ENCODE measurements at regions of chr15 and their contacts with region 1.

Region 1: DNA sequence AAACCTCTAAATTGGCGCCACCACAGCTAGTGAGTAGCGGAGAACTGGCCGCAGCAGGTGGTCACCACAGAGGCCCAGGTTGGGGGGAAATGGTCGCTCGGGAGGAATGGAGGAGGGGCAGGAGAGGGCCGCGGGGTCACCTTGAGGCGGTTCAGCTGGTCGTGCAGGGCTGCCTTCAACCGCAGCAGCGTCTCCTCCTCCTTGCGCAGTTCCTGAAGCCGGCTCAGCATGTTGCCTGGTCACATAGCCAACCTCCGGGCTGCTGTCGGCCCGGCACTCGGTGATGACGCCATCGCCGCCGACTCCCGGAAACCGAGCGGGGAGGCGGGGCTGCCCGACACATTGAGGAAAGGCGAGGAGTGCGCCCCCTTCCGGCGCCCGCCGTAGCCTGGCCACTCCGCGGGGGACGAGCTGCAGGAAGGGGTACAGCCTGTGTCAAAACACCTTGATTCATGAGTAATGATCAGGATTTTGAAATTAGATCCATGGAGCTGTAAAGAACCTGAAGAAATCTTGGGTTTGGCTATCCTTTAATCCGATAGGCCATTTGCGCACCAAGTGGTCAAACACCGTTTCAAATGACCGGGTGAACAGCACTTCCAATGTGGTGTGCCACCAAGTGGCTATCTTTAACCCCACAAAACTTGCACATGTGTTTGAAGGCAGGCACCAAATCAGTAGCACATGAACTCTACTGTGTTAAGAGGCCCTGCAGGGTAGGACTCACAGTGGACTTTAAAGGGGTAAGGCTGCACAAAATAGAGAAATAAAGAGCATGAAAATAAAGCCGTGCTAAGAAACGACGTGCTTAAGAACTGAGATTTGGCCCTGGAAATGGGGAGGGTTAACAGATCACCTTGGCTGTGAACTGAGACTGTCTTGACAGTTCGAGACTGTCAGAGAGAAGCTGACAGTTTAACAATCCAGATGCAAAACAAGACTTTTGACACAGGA is at the start of gene SNAPC5:
- DNase-seq: peak; percentile 98
- H3K4me3 ChIP-seq: peak within 1 kb of the TSS; percentile 75
- H3K27ac ChIP-seq: peak within 1 kb of the TSS; percentile 83
- H3K4me1 ChIP-seq: peaks cover 15% of the 10 kb centered on the region
- H3K27me3 ChIP-seq: no peaks in the 10 kb centered on the region
- CTCF ChIP-seq: peak; percentile 100
- total RNA-seq, gene SNAPC5: 28.9 and 35.2 TPM in 2 replicates

Region 2: GRCh38 chr15:66251790-66252684 is 245.7 kb before region 1 on chr15:
- CTCF ChIA-PET with region 1: no interaction called
- POLR2A ChIA-PET with region 1: no interaction called
- intact Hi-C with region 1: loop called (anchors 5 kb)
- DNase-seq: peak; percentile 67
- H3K4me3 ChIP-seq: peak overlapping the region; percentile 44
- H3K27ac ChIP-seq: no peak overlapping the region
- H3K4me1 ChIP-seq: peaks cover 5% of the 10 kb centered on the region
- H3K27me3 ChIP-seq: peaks cover 90% of the 10 kb centered on the region
- CTCF ChIP-seq: peak; percentile 85

Region 3: DNA sequence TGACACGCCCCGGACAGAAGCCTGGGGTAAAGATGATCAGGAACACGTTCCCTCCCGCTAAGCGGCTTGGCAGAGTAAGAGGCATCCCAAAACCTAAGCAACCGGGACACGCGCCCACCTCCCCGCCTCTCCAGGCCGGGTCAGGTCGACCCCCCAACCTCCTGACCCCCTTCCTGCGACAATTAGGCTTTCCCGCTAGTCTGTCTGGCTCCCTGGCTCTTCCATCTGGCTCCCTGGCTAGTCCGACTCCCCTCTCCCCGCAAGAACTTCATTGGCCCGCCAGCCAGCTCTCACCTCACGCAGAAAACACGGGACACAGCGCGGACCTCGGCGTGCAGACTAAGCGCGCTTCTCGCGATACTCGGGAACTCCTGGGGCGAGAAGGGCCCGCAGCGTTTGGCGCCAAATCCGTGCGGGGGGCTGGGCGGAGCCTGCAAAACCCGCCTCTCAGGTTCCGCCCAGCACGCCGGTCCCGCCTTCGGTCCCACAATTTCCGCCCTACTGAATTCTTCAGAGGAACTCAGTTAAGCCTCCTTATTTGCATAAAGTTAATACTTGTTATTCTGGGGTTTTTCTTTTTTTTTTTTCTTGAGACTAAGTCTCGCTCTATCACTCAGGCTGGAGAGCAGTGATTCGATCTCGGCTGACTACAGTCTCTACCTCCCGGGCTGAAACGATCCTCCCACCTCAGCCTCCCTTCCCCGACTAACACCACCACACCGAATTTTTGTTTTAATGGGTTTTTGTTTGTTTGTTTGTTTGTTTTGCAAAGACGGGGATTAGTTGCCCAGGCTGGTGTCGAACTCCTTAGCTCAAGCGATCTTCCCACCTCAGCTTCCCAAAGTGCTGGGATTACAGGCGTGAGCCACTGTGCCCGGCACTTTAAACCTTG is 141.2 kb before region 1 on chr15 and contains the start of gene TIPIN:
- CTCF ChIA-PET with region 1: no interaction called
- POLR2A ChIA-PET with region 1: no interaction called
- intact Hi-C with region 1: loop called (anchors 2 kb)
- DNase-seq: peak; percentile 97
- H3K4me3 ChIP-seq: peak within 1 kb of the TSS; percentile 86
- H3K27ac ChIP-seq: peak within 1 kb of the TSS; percentile 93
- H3K4me1 ChIP-seq: peaks cover 7% of the 10 kb centered on the region
- H3K27me3 ChIP-seq: no peaks in the 10 kb centered on the region
- CTCF ChIP-seq: no peak
- total RNA-seq, gene TIPIN: 37.7 and 42.1 TPM in 2 replicates

Region 4: GRCh38 chr15:66386204-66387123 is 111.3 kb before region 1 on chr15 and contains the start of gene MAP2K1:
- CTCF ChIA-PET with region 1: interaction called, 24 read pairs
- POLR2A ChIA-PET with region 1: no interaction called
- intact Hi-C with region 1: loop called (anchors 2 kb)
- DNase-seq: peak; percentile 99
- H3K4me3 ChIP-seq: peak within 1 kb of the TSS; percentile 99
- H3K27ac ChIP-seq: peak within 1 kb of the TSS; percentile 87
- H3K4me1 ChIP-seq: peaks cover 9% of the 10 kb centered on the region
- H3K27me3 ChIP-seq: no peaks in the 10 kb centered on the region
- CTCF ChIP-seq: peak; percentile 90
- total RNA-seq, gene MAP2K1: 53.4 and 56.8 TPM in 2 replicates

Region 5: GRCh38 chr15:66483131-66483566 is 14.6 kb before region 1 on chr15:
- CTCF ChIA-PET with region 1: no interaction called
- POLR2A ChIA-PET with region 1: no interaction called
- intact Hi-C with region 1: no loop called
- DNase-seq: no peak
- H3K4me3 ChIP-seq: no peak overlapping the region
- H3K27ac ChIP-seq: no peak overlapping the region
- H3K4me1 ChIP-seq: no peaks in the 10 kb centered on the region
- H3K27me3 ChIP-seq: no peaks in the 10 kb centered on the region
- CTCF ChIP-seq: no peak